ENCODE measurements at regions of chr4 and their contacts with region 1.

Region 1: GRCh38 chr4:165085946-165086345 is 26.7 kb downstream of the TMEM192 start:
- DNase-seq: no peak
- H3K4me3 ChIP-seq: no peak overlapping the region
- H3K27ac ChIP-seq: no peak overlapping the region
- H3K4me1 ChIP-seq: no peaks in the 10 kb centered on the region
- H3K27me3 ChIP-seq: no peaks in the 10 kb centered on the region
- CTCF ChIP-seq: no peak
- EP300 ChIP-seq: no peak
- POLR2A ChIP-seq: no peak
- RAD21 ChIP-seq: no peak

Region 2: DNA sequence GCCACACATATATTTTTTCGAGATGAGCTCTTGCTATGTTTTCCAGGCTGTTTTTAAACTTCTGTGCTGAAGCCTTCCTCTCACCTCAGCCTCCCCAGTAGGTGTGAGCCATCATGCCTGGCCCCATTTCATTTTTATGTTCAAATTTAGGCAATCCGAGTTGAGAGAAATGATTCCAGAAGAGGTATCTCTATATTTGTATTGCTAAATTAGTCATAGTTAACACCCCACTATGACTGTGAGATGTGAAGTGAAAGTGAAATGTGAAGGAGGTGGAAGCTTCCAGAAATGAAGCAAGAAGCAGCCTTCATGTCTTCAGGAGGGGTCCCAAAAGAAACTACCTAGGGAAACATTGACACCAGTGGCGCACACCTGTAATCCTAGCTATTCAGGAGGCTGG is 191.2 kb before region 1 on chr4:
- CTCF ChIA-PET with region 1: no interaction called
- POLR2A ChIA-PET with region 1: no interaction called
- DNase-seq: no peak
- H3K4me3 ChIP-seq: no peak overlapping the region
- H3K27ac ChIP-seq: no peak overlapping the region
- H3K4me1 ChIP-seq: peaks cover 0 to 3% (median 1%) of the 10 kb centered on the region in 4 experiments; a peak in 2 of 7 replicates
- H3K27me3 ChIP-seq: no peaks in the 10 kb centered on the region
- CTCF ChIP-seq: no peak
- EP300 ChIP-seq: no peak
- POLR2A ChIP-seq: no peak
- RAD21 ChIP-seq: no peak

Region 3: DNA sequence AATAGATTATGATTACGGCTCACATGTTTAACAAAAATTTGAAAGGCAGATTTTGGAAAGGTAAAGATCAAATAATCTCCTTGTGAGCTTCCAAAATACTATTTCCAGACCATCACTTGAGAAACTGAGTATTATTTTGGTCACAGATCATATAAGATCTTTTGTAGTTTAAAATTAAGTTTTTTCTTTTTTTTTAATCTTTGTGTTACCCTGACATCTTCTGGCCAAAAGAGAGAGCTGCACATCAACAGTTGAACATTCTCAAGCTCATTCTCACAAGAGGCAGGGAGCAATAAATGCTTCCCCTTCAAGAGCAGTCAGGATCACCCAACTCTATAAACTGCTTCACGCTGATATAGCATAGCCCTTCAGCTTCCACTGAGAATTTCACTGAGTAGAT is 10.8 kb after region 1 on chr4:
- CTCF ChIA-PET with region 1: interaction called, 14 read pairs
- POLR2A ChIA-PET with region 1: interaction called, 3 read pairs
- DNase-seq: no peak
- H3K4me3 ChIP-seq: no peak overlapping the region
- H3K27ac ChIP-seq: no peak overlapping the region
- H3K4me1 ChIP-seq: no peaks in the 10 kb centered on the region
- H3K27me3 ChIP-seq: no peaks in the 10 kb centered on the region
- CTCF ChIP-seq: peak in 2 of 3 experiments; percentile 40 to 50; a peak in 2 of 4 replicates
- EP300 ChIP-seq: no peak
- POLR2A ChIP-seq: no peak
- RAD21 ChIP-seq: peak; percentile 64 to 65

Region 4: GRCh38 chr4:165222651-165222994 is 136.7 kb after region 1 on chr4:
- CTCF ChIA-PET with region 1: no interaction called
- POLR2A ChIA-PET with region 1: no interaction called
- DNase-seq: no peak
- H3K4me3 ChIP-seq: no peak overlapping the region
- H3K27ac ChIP-seq: no peak overlapping the region
- H3K4me1 ChIP-seq: peaks cover 0 to 2% (median 0%) of the 10 kb centered on the region in 4 experiments; a peak in 1 of 7 replicates
- H3K27me3 ChIP-seq: no peaks in the 10 kb centered on the region
- CTCF ChIP-seq: no peak
- EP300 ChIP-seq: no peak
- POLR2A ChIP-seq: no peak
- RAD21 ChIP-seq: no peak